CD14-positive monocyte (primary cell): ENCODE measurements at regions of chr20 and their contacts with region 1.

Region 1: GRCh38 chr20:21125849-21126580 is at the start of gene KIZ:
- DNase-seq: peak; percentile 86 to 94 (median 90)
- H3K4me3 ChIP-seq: peak within 1 kb of the TSS; percentile 82 to 90 (median 87)
- H3K4me3 Mint-ChIP-seq: peak within 1 kb of the TSS; percentile 84 to 98
- H3K27ac ChIP-seq: peak within 1 kb of the TSS in 1 of 2 donors; percentile 70
- H3K27ac Mint-ChIP-seq: peak within 1 kb of the TSS in 6 of 7 donors; percentile 50 to 82 (median 56)
- H3K4me1 ChIP-seq: peaks cover 16% of the 10 kb centered on the region in 2 donors
- H3K4me1 Mint-ChIP-seq: peaks cover 14% of the 10 kb centered on the region
- H3K27me3 ChIP-seq: no peaks in the 10 kb centered on the region
- H3K27me3 Mint-ChIP-seq: peaks cover 4 to 12% (median 12%) of the 10 kb centered on the region in 3 donors
- CTCF ChIP-seq: no peak
- polyA plus RNA-seq, gene KIZ: 7.2 to 13.2 (median 10.2) TPM

Region 2: GRCh38 chr20:20052074-20052970 is 1073.7 kb before region 1 on chr20 and contains the starts of genes CFAP61 and CRNKL1:
- intact Hi-C with region 1: loop called in 1 of 2 experiments (anchors 10 kb)
- DNase-seq: peak; percentile 95 to 98 (median 98)
- H3K4me3 ChIP-seq: peak within 1 kb of the TSS; percentile 81 to 96 (median 91)
- H3K4me3 Mint-ChIP-seq: peak within 1 kb of the TSS; percentile 99
- H3K27ac ChIP-seq: peak within 1 kb of the TSS; percentile 76 to 92
- H3K27ac Mint-ChIP-seq: peak within 1 kb of the TSS; percentile 96 to 98 (median 98)
- H3K4me1 ChIP-seq: peaks cover 17 to 21% of the 10 kb centered on the region in 2 donors
- H3K4me1 Mint-ChIP-seq: peaks cover 19% of the 10 kb centered on the region
- H3K27me3 ChIP-seq: no peaks in the 10 kb centered on the region
- H3K27me3 Mint-ChIP-seq: peaks cover 0 to 1% (median 0%) of the 10 kb centered on the region in 3 donors
- CTCF ChIP-seq: no peak
- polyA plus RNA-seq, gene CFAP61: not detected
- polyA plus RNA-seq, gene CRNKL1: 4.0 to 7.4 (median 5.9) TPM

Region 3: DNA sequence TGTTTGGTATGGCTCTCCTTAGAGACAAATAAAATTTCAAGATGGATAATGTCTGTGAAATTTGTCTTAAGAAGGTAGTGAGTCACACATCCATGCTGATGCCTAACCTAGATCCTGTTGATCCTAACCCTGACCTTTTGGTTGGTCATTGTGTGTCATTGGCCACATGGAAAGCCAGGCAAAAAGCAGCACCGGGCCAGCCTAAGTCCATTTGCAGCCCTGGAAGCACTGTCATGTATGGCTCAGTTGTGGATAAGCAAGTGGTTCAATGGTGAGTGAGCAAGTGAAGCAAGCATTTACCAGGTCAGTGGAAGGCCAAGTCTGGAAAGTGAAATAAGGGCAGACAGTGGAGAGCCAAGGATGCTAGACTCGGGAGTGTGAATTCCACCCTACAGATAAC is 165.0 kb after region 1 on chr20:
- intact Hi-C with region 1: loop called in 1 of 2 experiments (anchors 10 kb)
- DNase-seq: no peak
- H3K4me3 ChIP-seq: no peak overlapping the region
- H3K4me3 Mint-ChIP-seq: no peak overlapping the region
- H3K27ac ChIP-seq: no peak overlapping the region
- H3K27ac Mint-ChIP-seq: peak overlapping the region in 1 of 7 donors; percentile 28
- H3K4me1 ChIP-seq: no peaks in the 10 kb centered on the region
- H3K4me1 Mint-ChIP-seq: no peaks in the 10 kb centered on the region
- H3K27me3 ChIP-seq: peaks cover 3 to 5% of the 10 kb centered on the region in 2 donors
- H3K27me3 Mint-ChIP-seq: peaks cover 13 to 17% (median 17%) of the 10 kb centered on the region in 3 donors
- CTCF ChIP-seq: no peak